ENCODE measurements at regions of chr1 and their contacts with region 1.

Region 1: GRCh38 chr1:25011943-25012638 is 82.0 kb upstream of the RUNX3 start:
- DNase-seq: no peak
- H3K4me3 ChIP-seq: no peak overlapping the region
- H3K27ac ChIP-seq: no peak overlapping the region
- H3K4me1 ChIP-seq: peaks cover 0 to 69% (median 10%) of the 10 kb centered on the region in 4 experiments
- H3K27me3 ChIP-seq: no peaks in the 10 kb centered on the region

Region 2: GRCh38 chr1:24909388-24909898 is 102.6 kb before region 1 on chr1:
- CTCF ChIA-PET with region 1: no interaction called
- POLR2A ChIA-PET with region 1: no interaction called
- DNase-seq: peak; percentile 62 to 73 (median 70)
- H3K4me3 ChIP-seq: no peak overlapping the region
- H3K27ac ChIP-seq: no peak overlapping the region
- H3K4me1 ChIP-seq: peaks cover 0 to 4% (median 2%) of the 10 kb centered on the region in 4 experiments
- H3K27me3 ChIP-seq: no peaks in the 10 kb centered on the region

Region 3: GRCh38 chr1:25031966-25032667 is 20.0 kb after region 1 on chr1:
- CTCF ChIA-PET with region 1: interaction called, 14 read pairs
- POLR2A ChIA-PET with region 1: no interaction called
- DNase-seq: peak; percentile 72 to 91 (median 88)
- H3K4me3 ChIP-seq: peak overlapping the region in 1 of 7 experiments; percentile 7
- H3K27ac ChIP-seq: peak overlapping the region; percentile 67 to 83
- H3K4me1 ChIP-seq: peaks cover 20 to 99% (median 94%) of the 10 kb centered on the region in 4 experiments
- H3K27me3 ChIP-seq: no peaks in the 10 kb centered on the region

Region 4: DNA sequence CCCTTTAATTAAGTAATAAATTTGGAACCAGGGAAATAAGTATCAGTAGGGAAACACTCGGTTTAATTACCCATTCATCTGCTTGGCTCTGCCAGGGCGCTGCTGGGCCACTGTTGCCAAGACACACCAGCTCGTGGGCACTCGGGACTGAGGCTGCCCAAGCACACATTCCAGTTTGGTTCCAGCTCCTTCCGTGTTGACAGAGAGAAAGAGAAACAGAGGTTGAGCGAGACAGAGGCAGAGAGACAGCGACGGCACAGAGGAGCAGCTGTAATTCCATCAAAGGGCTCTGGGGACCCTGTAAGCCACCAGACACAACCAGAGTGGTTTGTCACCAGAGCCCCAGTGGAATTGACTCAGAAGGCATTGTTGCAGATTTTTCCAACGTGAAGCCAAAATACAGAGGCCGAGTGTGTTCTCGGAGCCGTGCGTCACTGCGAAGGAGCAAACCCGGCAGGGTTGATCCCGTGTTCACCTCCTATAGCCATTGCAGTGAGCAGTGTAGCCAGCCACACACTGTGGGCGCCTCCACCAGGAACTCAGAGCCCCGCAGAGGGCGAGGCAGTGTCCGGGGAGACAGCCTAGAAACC is 186.7 kb after region 1 on chr1:
- CTCF ChIA-PET with region 1: no interaction called
- POLR2A ChIA-PET with region 1: no interaction called
- DNase-seq: peak; percentile 23 to 74 (median 64)
- H3K4me3 ChIP-seq: peak overlapping the region in 2 of 7 experiments; percentile 8 to 51
- H3K27ac ChIP-seq: peak overlapping the region in 1 of 2 experiments; percentile 2
- H3K4me1 ChIP-seq: peaks cover 0 to 26% (median 20%) of the 10 kb centered on the region in 4 experiments
- H3K27me3 ChIP-seq: no peaks in the 10 kb centered on the region